ENCODE measurements at regions of chr1 and their contacts with region 1.

Region 1: DNA sequence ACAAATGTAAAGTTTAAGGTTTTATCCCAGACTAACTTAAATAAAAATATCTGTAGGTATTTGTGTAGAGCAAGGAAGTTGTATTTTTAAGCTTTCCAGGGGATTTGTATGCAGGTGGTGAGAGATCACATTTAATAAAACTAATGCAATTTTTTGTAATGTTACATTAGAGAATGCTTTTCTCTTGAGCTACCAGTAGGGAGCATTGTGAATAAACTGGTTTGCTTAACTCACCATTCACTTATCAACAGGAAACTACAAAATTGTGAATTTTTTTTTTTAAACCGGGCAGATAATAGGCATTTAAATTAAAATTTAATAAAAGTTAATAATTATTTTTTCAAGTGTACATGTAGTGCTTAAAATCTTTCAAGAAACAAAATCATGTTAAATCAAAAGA is 78.6 kb downstream of the IVNS1ABP start:
- DNase-seq: peak in 6 of 9 donors; percentile 11 to 49 (median 35)
- ATAC-seq: peak; percentile 64
- H3K4me3 ChIP-seq: no peak overlapping the region
- H3K4me3 Mint-ChIP-seq: peak overlapping the region in 9 of 10 donors; percentile 3 to 73 (median 45)
- H3K27ac ChIP-seq: no peak overlapping the region
- H3K27ac Mint-ChIP-seq: peak overlapping the region in 4 of 9 donors; percentile 3 to 81 (median 13)
- H3K4me1 ChIP-seq: peaks cover 7 to 10% of the 10 kb centered on the region in 2 donors
- H3K4me1 Mint-ChIP-seq: peaks cover 5 to 33% (median 29%) of the 10 kb centered on the region in 7 donors
- H3K27me3 ChIP-seq: no peaks in the 10 kb centered on the region
- H3K27me3 Mint-ChIP-seq: no peaks in the 10 kb centered on the region

Region 2: GRCh38 chr1:185249563-185249962 is 11.1 kb after region 1 on chr1:
- CTCF ChIA-PET with region 1: interaction called, 11 read pairs
- POLR2A ChIA-PET with region 1: no interaction called
- intact Hi-C with region 1: loop called in 1 of 2 experiments (anchors 1 kb)
- DNase-seq: no peak
- ATAC-seq: no peak
- H3K4me3 ChIP-seq: no peak overlapping the region
- H3K4me3 Mint-ChIP-seq: no peak overlapping the region
- H3K27ac ChIP-seq: no peak overlapping the region
- H3K27ac Mint-ChIP-seq: peak overlapping the region in 3 of 9 donors; percentile 5 to 81 (median 54)
- H3K4me1 ChIP-seq: no peaks in the 10 kb centered on the region
- H3K4me1 Mint-ChIP-seq: peaks cover 0 to 27% (median 16%) of the 10 kb centered on the region in 7 donors
- H3K27me3 ChIP-seq: no peaks in the 10 kb centered on the region
- H3K27me3 Mint-ChIP-seq: no peaks in the 10 kb centered on the region

Region 3: DNA sequence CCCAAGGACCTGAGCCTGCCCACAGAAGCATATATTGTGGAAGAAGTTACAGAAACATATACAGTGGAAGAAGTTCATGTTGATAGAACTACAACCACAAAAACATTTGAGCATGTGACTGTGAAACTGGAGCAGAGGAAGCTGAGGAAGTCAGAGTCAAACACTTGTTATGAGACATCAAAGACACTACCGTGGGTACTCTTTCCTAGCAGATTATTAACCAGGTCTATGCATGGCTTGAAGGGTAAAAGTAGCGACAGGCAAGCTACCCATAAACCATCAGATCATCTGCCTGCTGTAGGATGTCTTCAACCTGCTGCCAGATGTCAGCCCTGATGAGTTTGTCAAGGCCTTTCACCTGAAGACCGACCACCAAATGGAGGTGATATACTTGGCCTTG is 42.8 kb after region 1 on chr1:
- CTCF ChIA-PET with region 1: interaction called, 19 read pairs
- POLR2A ChIA-PET with region 1: interaction called, 33 read pairs
- intact Hi-C with region 1: loop called (anchors 1 to 5 kb)
- DNase-seq: peak in 7 of 9 donors; percentile 56 to 81 (median 72)
- ATAC-seq: peak; percentile 92
- H3K4me3 ChIP-seq: peak overlapping the region; percentile 11
- H3K4me3 Mint-ChIP-seq: peak overlapping the region; percentile 62 to 88 (median 75)
- H3K27ac ChIP-seq: peak overlapping the region; percentile 59
- H3K27ac Mint-ChIP-seq: peak overlapping the region; percentile 86 to 100 (median 96)
- H3K4me1 ChIP-seq: peaks cover 23 to 55% of the 10 kb centered on the region in 2 donors
- H3K4me1 Mint-ChIP-seq: peaks cover 40 to 75% (median 71%) of the 10 kb centered on the region in 7 donors
- H3K27me3 ChIP-seq: no peaks in the 10 kb centered on the region
- H3K27me3 Mint-ChIP-seq: no peaks in the 10 kb centered on the region

Region 4: DNA sequence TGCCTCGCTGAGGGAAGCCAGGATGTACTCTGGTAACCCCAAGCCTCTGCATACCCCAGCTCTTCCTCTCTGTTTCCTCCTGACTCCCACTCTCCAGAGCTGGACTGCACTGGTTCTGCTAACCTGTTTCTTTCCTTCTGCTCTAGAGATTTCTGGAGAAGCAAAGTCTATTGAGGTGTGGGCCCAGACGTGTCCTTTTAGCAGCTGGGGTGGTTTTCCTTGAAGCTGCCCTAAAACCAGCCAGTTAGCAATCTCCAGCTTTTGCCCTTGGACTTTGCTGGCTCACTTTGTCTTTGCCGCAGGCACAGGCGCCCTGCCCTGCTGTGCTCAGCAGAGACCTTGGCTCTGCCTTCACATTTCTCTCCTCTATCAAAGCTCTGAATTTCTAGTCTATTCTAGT is 250.4 kb after region 1 on chr1:
- CTCF ChIA-PET with region 1: no interaction called
- POLR2A ChIA-PET with region 1: no interaction called
- intact Hi-C with region 1: no loop called
- DNase-seq: no peak
- ATAC-seq: no peak
- H3K4me3 ChIP-seq: no peak overlapping the region
- H3K4me3 Mint-ChIP-seq: no peak overlapping the region
- H3K27ac ChIP-seq: no peak overlapping the region
- H3K27ac Mint-ChIP-seq: peak overlapping the region in 4 of 9 donors; percentile 3 to 72 (median 22)
- H3K4me1 ChIP-seq: no peaks in the 10 kb centered on the region
- H3K4me1 Mint-ChIP-seq: peaks cover 0 to 12% (median 6%) of the 10 kb centered on the region in 7 donors
- H3K27me3 ChIP-seq: no peaks in the 10 kb centered on the region
- H3K27me3 Mint-ChIP-seq: no peaks in the 10 kb centered on the region

Region 5: DNA sequence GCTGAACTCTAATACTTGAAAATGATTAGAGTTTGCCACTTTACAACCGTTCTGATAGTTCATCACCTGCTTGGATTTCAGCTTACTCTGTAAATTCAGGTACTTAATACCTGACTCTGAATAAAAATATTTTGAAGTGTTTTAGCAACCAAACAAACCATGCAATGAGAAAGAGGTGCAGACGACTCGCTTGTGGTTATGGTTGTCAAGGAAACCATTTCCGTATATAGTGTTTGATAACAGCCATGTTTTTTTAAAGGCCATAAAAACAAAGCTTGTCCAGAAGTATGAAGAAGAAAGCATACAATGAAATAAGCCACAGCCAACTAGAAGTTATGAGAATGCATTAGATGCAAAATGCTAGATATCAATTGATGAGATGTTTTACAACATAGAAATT is 328.5 kb after region 1 on chr1:
- CTCF ChIA-PET with region 1: interaction called, 6 read pairs
- POLR2A ChIA-PET with region 1: no interaction called
- intact Hi-C with region 1: loop called in 1 of 2 experiments (anchors 2 kb)
- DNase-seq: peak in 7 of 9 donors; percentile 85 to 94 (median 91)
- ATAC-seq: peak; percentile 92
- H3K4me3 ChIP-seq: no peak overlapping the region
- H3K4me3 Mint-ChIP-seq: peak overlapping the region; percentile 46 to 87 (median 78)
- H3K27ac ChIP-seq: peak overlapping the region; percentile 89
- H3K27ac Mint-ChIP-seq: peak overlapping the region; percentile 96 to 100 (median 98)
- H3K4me1 ChIP-seq: peaks cover 37 to 56% of the 10 kb centered on the region in 2 donors
- H3K4me1 Mint-ChIP-seq: peaks cover 47 to 91% (median 86%) of the 10 kb centered on the region in 7 donors
- H3K27me3 ChIP-seq: no peaks in the 10 kb centered on the region
- H3K27me3 Mint-ChIP-seq: no peaks in the 10 kb centered on the region

Region 6: DNA sequence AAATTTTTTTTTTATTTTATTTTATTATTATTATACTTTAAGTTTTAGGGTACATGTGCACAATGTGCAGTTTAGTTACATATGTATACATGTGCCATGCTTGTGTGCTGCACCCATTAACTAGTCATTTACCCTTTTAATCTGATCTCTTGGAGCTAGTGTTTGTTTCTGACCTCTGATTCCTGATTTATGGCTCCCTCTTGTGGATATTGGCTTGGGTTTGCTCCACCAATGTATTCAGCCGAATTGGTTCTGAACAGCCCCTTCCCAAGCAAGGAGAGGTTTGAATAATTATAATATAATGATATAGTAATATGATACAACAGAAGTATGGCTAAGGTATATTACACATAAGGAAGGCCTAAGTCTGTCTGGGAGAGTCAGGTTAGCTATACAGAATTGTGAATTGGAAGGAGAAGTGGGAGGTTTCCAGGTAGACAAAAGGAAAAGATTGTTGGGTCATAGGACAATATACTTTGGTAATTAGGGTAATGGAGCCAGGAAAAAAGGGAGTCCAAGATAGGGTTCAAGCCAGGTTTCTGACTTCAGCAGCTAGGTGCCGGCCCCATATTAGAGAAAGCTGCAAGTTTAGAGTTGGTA is 442.7 kb after region 1 on chr1:
- CTCF ChIA-PET with region 1: interaction called, 39 read pairs
- POLR2A ChIA-PET with region 1: interaction called, 7 read pairs
- intact Hi-C with region 1: loop called in 1 of 2 experiments (anchors 1 kb)
- DNase-seq: peak in 6 of 9 donors; percentile 19 to 53 (median 40)
- ATAC-seq: peak; percentile 65
- H3K4me3 ChIP-seq: no peak overlapping the region
- H3K4me3 Mint-ChIP-seq: peak overlapping the region in 2 of 10 donors; percentile 12 to 39
- H3K27ac ChIP-seq: no peak overlapping the region
- H3K27ac Mint-ChIP-seq: peak overlapping the region in 1 of 9 donors; percentile 14
- H3K4me1 ChIP-seq: peaks cover 4 to 13% of the 10 kb centered on the region in 2 donors
- H3K4me1 Mint-ChIP-seq: peaks cover 13 to 41% (median 28%) of the 10 kb centered on the region in 7 donors
- H3K27me3 ChIP-seq: no peaks in the 10 kb centered on the region
- H3K27me3 Mint-ChIP-seq: peaks cover 0 to 16% (median 0%) of the 10 kb centered on the region in 5 donors

Region 7: GRCh38 chr1:186002421-186002820 is 764.0 kb after region 1 on chr1:
- CTCF ChIA-PET with region 1: no interaction called
- POLR2A ChIA-PET with region 1: no interaction called
- intact Hi-C with region 1: no loop called
- DNase-seq: no peak
- ATAC-seq: no peak
- H3K4me3 ChIP-seq: no peak overlapping the region
- H3K4me3 Mint-ChIP-seq: no peak overlapping the region
- H3K27ac ChIP-seq: no peak overlapping the region
- H3K27ac Mint-ChIP-seq: no peak overlapping the region
- H3K4me1 ChIP-seq: no peaks in the 10 kb centered on the region
- H3K4me1 Mint-ChIP-seq: no peaks in the 10 kb centered on the region
- H3K27me3 ChIP-seq: no peaks in the 10 kb centered on the region
- H3K27me3 Mint-ChIP-seq: peaks cover 0 to 5% (median 4%) of the 10 kb centered on the region in 5 donors